ENCODE measurements at regions of chr4 and their contacts with region 1.

Region 1: GRCh38 chr4:17324386-17324830 is 187.5 kb downstream of the QDPR start:
- DNase-seq: peak; percentile 61
- H3K4me3 Mint-ChIP-seq: no peak overlapping the region
- H3K27ac Mint-ChIP-seq: no peak overlapping the region
- H3K4me1 Mint-ChIP-seq: no peaks in the 10 kb centered on the region
- H3K27me3 Mint-ChIP-seq: no peaks in the 10 kb centered on the region
- CTCF ChIP-seq: peak; percentile 65

Region 2: DNA sequence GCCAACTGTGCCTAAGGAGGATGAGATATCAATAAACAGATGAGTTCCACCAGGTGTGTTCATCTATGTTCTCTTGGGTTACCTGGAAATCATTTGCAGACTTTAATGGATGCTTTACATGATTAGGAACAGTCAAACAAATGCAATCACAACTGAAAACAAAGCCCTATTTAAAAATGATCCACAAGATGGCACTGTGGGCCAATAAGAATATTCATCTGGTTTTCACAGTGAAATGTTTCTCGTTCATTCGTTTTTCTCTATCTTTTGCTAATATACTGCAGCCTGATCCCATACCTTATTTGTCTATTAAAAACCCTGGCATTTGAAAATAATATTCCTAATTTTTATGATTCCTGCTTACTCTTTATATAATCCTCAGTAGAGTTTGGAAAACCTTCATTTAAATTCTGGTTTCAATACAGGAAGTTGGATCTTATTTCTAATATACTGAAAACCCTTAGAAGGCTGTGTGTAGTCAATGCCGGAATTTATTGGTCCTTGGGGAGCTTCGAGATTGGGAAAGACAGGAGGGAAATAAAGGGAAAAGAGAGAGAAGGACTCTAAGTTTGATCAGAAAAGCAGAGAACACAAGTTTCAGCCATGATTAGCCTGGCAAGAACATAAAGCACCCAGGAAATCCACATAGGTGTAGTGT is 1034.4 kb before region 1 on chr4:
- CTCF ChIA-PET with region 1: interaction called, 63 read pairs
- POLR2A ChIA-PET with region 1: no interaction called
- intact Hi-C with region 1: loop called (anchors 2 kb)
- DNase-seq: peak; percentile 54
- H3K4me3 Mint-ChIP-seq: no peak overlapping the region
- H3K27ac Mint-ChIP-seq: no peak overlapping the region
- H3K4me1 Mint-ChIP-seq: peaks cover 6% of the 10 kb centered on the region
- H3K27me3 Mint-ChIP-seq: peaks cover 23% of the 10 kb centered on the region
- CTCF ChIP-seq: peak; percentile 53

Region 3: DNA sequence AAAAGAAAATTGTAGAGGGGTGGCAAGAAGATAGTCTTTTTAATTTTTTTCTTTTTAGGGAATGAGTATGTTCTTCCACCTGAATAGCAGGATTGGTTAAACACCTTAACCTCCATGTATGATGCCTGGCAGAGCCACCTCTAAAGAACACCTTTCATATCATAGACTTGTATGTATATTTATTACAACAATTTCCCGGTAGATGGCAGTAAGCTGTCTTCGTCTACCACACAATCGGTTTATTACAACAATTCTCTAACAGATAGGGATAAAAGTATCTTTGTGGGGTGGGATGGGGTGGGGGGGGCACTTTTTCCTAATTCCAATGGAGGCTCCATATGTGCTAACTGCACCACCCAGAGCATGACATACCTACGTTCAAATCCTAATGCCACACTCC is 681.5 kb before region 1 on chr4:
- CTCF ChIA-PET with region 1: interaction called, 78 read pairs
- POLR2A ChIA-PET with region 1: no interaction called
- intact Hi-C with region 1: loop called (anchors 1 kb)
- DNase-seq: peak; percentile 32
- H3K4me3 Mint-ChIP-seq: no peak overlapping the region
- H3K27ac Mint-ChIP-seq: no peak overlapping the region
- H3K4me1 Mint-ChIP-seq: peaks cover 7% of the 10 kb centered on the region
- H3K27me3 Mint-ChIP-seq: peaks cover 73% of the 10 kb centered on the region
- CTCF ChIP-seq: peak; percentile 22

Region 4: DNA sequence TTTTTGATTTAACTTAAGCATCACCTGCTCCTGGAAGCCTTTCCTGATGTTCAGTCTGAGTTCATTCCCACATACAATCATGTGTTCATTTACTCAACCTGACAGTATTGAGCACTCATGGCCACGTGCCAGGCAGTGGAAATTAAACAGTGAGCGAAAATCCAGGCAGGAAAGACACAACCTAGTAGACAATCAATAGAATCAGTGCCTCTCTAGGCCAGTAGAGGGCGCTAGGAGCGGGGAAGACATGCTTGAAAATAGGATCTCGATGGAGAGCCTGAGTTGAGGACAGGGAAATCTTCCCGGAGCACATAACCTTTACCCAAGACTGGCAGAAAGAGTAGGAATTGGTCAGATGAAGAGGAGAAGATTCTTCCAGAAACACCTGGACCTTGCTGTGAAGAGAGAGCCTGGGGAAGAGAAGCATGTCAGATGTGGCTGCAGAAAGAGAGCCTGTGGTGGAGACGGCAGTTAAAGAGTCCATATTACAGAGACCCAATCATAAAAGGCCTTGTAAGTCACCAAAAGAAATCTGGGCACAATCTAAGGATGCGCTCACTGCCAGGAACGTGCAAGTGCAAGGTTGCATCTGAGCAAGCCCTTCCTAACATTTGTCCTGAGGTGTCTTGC is 529.5 kb before region 1 on chr4:
- CTCF ChIA-PET with region 1: interaction called, 13 read pairs
- POLR2A ChIA-PET with region 1: no interaction called
- intact Hi-C with region 1: loop called (anchors 1 kb)
- DNase-seq: peak; percentile 64
- H3K4me3 Mint-ChIP-seq: no peak overlapping the region
- H3K27ac Mint-ChIP-seq: no peak overlapping the region
- H3K4me1 Mint-ChIP-seq: no peaks in the 10 kb centered on the region
- H3K27me3 Mint-ChIP-seq: peaks cover 23% of the 10 kb centered on the region
- CTCF ChIP-seq: peak; percentile 75

Region 5: GRCh38 chr4:17112292-17112659 is 212.1 kb before region 1 on chr4:
- CTCF ChIA-PET with region 1: no interaction called
- POLR2A ChIA-PET with region 1: no interaction called
- intact Hi-C with region 1: loop called (anchors 10 kb)
- DNase-seq: peak; percentile 63
- H3K4me3 Mint-ChIP-seq: no peak overlapping the region
- H3K27ac Mint-ChIP-seq: no peak overlapping the region
- H3K4me1 Mint-ChIP-seq: no peaks in the 10 kb centered on the region
- H3K27me3 Mint-ChIP-seq: no peaks in the 10 kb centered on the region
- CTCF ChIP-seq: peak; percentile 35

Measured in MCF 10A (cell line).